Left colon (tissue), 2 donors: ENCODE measurements at regions of chr20 and their contacts with region 1.

Region 1: DNA sequence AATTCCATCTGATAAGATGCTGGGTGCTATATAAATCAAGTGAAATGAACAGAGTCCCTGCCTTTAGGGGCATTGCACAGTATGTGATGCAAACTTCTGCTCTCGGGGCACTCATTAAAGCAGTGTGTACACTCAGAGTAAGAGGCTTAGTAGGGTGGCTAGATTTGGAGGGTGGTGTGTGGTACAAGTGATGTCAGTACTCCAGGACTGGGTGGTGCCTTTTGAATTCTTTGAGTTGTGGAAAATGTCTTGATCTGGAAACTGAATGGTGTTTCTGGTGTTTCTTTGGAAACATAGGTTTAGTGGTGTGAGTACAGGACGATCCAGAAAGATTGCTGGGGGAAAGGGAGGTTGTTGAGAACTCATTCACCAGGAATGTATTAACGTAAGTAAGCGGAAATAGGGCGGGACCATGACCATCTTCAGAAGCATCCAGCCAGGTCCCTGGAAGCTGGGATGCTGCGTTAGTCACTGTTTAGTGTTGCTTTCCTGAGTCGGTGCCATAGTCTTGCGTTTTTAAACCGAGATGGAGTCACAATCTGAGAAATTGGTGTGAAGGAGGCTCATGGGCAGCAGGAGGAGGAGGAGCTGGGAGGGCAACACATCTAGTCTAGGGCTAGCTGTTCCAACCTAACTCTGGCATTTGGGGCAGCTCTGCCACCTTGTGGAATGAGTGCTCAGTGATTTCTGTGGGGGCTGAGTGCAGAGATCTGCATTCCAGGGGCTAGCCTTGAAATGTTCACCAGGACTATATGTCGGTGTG is 70.3 kb downstream of the SCAND1 start:
- DNase-seq: peak; percentile 51 to 52
- ATAC-seq: peak; percentile 86

Region 2: DNA sequence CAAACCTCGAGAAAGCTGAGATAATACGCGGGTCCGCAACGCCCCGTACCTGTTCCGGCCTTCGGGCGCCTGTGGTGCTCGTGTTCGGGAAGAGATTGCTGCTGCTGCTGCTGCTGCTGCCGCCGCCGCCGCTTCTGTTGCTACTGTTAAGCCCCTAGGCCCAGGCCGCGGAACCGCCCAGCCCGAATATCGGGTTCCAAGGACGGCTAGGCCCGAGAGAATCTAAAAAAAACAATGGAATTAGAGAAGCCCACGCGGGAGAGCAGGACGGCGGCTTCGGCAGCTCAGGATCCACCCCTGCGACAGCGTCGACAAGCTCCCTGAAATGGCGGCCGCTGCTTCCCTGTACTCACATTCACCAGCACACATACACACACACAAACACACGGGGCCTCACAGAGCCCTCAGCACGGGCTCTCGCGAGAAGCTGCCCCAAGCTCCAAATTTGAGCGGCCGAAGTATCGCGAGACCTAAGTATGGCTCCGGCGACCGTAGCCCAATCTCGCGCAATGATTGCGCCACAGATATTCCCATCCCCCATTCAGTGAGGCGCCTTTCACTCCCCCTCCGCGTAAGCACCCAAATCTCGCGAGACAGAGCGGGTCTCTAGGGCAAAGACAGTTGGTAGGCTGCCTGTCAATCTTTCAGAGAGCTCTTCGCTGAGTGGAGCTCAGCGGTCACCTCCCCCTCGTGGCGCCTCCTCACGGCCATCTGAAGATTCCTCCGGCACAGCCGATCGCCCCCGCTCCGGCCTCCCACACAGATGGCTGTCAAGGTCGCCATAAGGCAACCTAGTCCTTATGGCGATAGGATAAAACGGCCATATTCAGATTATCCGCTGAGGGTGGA is 141.8 kb before region 1 on chr20 and contains the start of gene RBM39:
- intact Hi-C with region 1: loop called in 1 of 2 experiments (anchors 5 kb)
- DNase-seq: peak; percentile 99 to 100
- ATAC-seq: peak; percentile 87
- total RNA-seq, gene RBM39: 221 to 232 TPM

Region 3: DNA sequence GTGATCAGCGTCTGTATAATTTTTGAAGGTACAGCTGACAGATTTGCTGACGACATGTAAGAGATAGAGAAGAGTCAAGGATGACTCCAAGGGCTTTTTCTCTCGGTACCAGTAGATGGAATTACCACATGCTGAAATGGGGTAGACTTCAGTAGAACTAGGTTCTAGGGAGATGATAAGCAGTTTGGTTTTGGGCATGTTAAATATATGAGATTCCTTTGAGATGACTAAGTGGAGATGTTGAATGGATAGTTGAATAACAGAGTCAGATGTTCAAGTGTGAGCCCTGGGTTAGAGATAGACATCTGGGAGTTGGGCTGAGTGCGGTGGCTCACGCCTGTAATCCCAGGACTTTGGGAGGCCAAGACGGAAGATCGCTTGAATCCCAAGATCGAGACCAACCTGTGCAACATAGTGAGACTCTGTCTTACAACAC is 62.1 kb before region 1 on chr20:
- intact Hi-C with region 1: loop called in 1 of 2 experiments (anchors 10 kb)
- DNase-seq: no peak
- ATAC-seq: no peak